ENCODE measurements at regions of chr19 and their contacts with region 1.

Region 1: GRCh38 chr19:39843919-39844793 is 2.0 kb downstream of the FBL start:
- DNase-seq: peak; percentile 64
- ATAC-seq: no peak
- H3K4me3 ChIP-seq: peak overlapping the region; percentile 99
- H3K27ac ChIP-seq: no peak overlapping the region
- H3K4me1 ChIP-seq: peaks cover 32% of the 10 kb centered on the region
- H3K27me3 ChIP-seq: no peaks in the 10 kb centered on the region
- CTCF ChIP-seq: peak; percentile 64

Region 2: GRCh38 chr19:39765091-39766076 is 78.8 kb before region 1 on chr19:
- CTCF ChIA-PET with region 1: interaction called, 3 read pairs
- POLR2A ChIA-PET with region 1: no interaction called
- intact Hi-C with region 1: loop called (anchors 2 kb)
- DNase-seq: peak; percentile 57
- ATAC-seq: no peak
- H3K4me3 ChIP-seq: no peak overlapping the region
- H3K27ac ChIP-seq: no peak overlapping the region
- H3K4me1 ChIP-seq: no peaks in the 10 kb centered on the region
- H3K27me3 ChIP-seq: peaks cover 21% of the 10 kb centered on the region
- CTCF ChIP-seq: peak; percentile 83

Region 3: DNA sequence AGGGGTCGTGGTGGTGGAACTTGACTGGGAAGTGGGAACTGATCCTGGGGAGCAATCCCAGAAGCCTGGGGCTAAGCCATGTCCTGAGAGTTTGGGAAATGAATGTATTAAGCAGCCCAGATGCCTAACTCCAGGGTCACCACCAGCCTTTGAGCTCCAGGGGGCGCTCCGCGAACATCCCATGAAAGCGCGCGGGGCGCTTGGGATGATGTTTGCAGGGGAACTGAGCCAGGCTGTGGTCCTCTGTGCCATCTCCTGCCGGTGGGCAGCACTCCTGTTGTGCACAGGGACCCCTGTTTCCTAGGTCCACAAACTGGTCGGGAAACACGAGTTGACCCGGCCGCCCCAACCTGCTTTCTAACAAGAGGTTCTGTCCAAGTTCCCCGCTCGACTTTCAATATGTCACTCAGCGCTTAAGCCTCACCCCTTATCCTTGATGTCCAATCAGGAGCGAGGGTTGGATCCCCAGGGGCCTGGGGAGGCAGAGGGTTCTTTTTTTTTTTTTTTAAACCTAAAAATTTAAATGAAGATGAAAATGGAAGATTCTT is 51.1 kb before region 1 on chr19:
- CTCF ChIA-PET with region 1: interaction called, 4 read pairs
- POLR2A ChIA-PET with region 1: no interaction called
- intact Hi-C with region 1: loop called (anchors 2 kb)
- DNase-seq: peak; percentile 64
- ATAC-seq: peak; percentile 92
- H3K4me3 ChIP-seq: peak overlapping the region; percentile 67
- H3K27ac ChIP-seq: no peak overlapping the region
- H3K4me1 ChIP-seq: no peaks in the 10 kb centered on the region
- H3K27me3 ChIP-seq: peaks cover 24% of the 10 kb centered on the region
- CTCF ChIP-seq: peak; percentile 90

Region 4: DNA sequence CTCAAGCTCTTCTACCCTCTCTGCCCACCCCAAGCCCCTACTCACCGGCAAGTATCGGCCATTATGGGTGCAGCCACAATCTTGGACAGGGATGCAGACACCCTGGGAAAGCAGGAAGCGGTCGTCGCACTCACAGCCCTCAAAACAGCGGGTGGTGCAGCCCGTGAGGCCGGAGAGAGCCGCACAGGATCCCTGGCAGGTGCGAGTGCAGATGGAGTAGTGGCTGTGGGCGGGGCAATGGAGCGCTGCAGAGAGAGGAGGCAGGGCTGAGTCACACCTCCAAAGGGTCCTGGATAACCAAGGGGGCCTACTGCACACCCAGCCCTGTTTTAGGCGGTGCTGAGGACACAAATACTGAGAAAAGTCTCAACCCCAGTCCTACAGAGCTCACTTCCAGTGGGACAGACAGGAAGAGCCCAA is 26.0 kb after region 1 on chr19:
- CTCF ChIA-PET with region 1: no interaction called
- POLR2A ChIA-PET with region 1: interaction called, 13 read pairs
- intact Hi-C with region 1: no loop called
- DNase-seq: no peak
- ATAC-seq: no peak
- H3K4me3 ChIP-seq: no peak overlapping the region
- H3K27ac ChIP-seq: no peak overlapping the region
- H3K4me1 ChIP-seq: no peaks in the 10 kb centered on the region
- H3K27me3 ChIP-seq: no peaks in the 10 kb centered on the region
- CTCF ChIP-seq: no peak